ENCODE measurements at regions of chr1 and their contacts with region 1.

Region 1: GRCh38 chr1:39973503-39974135 is 18.7 kb downstream of the MFSD2A start:
- DNase-seq: peak; percentile 89

Region 2: GRCh38 chr1:39816415-39817090 is 157.1 kb before region 1 on chr1:
- intact Hi-C with region 1: loop called (anchors 5 kb)
- DNase-seq: peak; percentile 94

Region 3: DNA sequence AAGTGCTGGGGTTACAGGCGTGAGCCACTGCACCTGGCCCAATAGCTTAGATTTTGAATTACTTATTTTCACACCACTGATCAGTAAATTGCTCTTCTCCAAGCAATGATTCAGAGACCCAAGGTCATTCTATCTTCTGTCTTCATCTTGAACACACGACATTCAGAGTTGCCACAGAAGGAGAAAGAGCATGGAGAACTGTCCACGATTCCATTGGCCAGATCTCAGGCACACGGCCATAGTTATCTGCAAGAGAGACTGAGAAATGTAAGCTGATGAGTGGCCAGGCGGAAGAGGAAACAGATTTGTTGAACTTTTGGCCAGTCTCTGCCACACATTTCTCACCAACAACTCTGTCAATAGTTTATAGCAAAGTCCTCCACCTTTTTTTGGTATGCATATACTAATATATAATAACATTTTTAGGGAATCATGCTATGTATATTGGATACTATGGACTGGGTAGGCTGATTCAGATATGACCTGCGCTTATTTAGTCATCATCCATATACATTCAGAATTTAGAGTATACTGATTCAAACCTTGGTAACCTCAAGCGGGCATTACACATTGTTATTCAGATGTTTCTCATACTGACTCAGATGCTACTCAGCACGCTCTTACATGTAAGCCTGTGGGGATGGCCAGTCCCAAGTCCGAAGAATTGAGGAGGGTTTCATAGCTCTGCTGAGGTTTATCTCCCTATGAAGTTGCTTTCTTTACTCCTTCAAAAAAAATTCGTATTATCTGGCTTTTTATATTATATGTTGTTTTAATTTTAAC is 41.4 kb after region 1 on chr1:
- intact Hi-C with region 1: no loop called
- DNase-seq: no peak

Measured in posterior vena cava (tissue), 2 donors.